ENCODE measurements at regions of chr7 and their contacts with region 1.

Region 1: GRCh38 chr7:28685644-28686417 is 272.3 kb downstream of the TRIL start:
- DNase-seq: peak; percentile 96 to 98
- H3K4me3 ChIP-seq: peak overlapping the region; percentile 47 to 50
- H3K27ac ChIP-seq: peak overlapping the region; percentile 72 to 73
- H3K4me1 ChIP-seq: peaks cover 0 to 38% (median 16%) of the 10 kb centered on the region in 4 donors
- H3K27me3 ChIP-seq: no peaks in the 10 kb centered on the region
- CTCF ChIP-seq: no peak

Region 2: GRCh38 chr7:28626624-28627262 is 59.1 kb before region 1 on chr7:
- intact Hi-C with region 1: loop called (anchors 5 kb)
- DNase-seq: peak in 1 of 2 donors; percentile 26
- H3K4me3 ChIP-seq: no peak overlapping the region
- H3K27ac ChIP-seq: no peak overlapping the region
- H3K4me1 ChIP-seq: peaks cover 0 to 92% (median 2%) of the 10 kb centered on the region in 4 donors
- H3K27me3 ChIP-seq: no peaks in the 10 kb centered on the region
- CTCF ChIP-seq: peak; percentile 45 to 48

Region 3: DNA sequence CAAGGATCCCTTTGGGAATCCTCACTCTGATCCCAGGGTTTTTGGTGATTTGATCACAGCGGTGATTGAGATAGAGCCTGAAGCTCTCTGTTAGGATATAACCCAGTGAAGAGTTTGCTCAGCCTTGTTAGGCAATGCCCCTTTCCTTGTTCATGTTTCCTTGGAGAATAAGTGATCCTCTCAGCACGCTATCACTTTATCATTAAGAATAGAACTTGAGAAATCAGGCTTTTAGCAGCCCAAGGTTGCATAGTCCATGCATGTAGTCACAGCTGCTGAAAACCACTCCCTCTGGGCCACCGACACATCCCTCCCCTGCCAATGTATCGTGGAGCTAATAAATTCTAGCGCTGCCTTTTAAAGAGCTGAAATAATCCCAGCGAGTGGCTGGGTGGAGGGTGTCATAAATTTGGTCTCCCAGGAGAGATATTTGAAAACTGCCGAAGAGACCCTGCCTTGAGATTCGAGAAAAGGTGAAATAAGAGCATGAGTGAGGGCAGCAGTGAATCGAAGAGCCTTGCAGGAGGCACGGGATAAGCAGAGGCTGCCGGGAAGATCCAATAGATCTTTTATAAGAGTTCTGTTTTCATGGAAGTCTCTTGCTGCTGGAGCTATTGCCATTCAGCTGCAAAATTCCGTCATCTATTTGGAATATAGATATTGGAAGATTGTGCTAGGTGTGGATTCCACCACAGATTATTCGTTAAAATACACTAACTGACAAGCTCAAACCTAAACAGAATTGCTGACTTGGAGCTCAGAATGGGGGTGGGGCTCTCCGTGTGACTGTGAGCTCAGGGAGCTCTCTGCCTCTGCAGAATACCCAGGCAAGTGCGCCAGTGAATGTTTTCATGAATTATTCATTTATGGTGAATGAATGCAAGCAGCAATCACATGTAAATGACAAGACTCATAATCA is 22.5 kb after region 1 on chr7:
- intact Hi-C with region 1: no loop called
- DNase-seq: peak in 1 of 2 donors; percentile 31
- H3K4me3 ChIP-seq: peak overlapping the region; percentile 41 to 46
- H3K27ac ChIP-seq: peak overlapping the region in 1 of 2 donors; percentile 46
- H3K4me1 ChIP-seq: peaks cover 0 to 20% (median 9%) of the 10 kb centered on the region in 4 donors
- H3K27me3 ChIP-seq: no peaks in the 10 kb centered on the region
- CTCF ChIP-seq: no peak

Region 4: GRCh38 chr7:30322271-30323005 is 1636.6 kb after region 1 on chr7:
- intact Hi-C with region 1: no loop called
- DNase-seq: no peak
- H3K4me3 ChIP-seq: no peak overlapping the region
- H3K27ac ChIP-seq: no peak overlapping the region
- H3K4me1 ChIP-seq: peaks cover 0 to 23% (median 8%) of the 10 kb centered on the region in 4 donors
- H3K27me3 ChIP-seq: no peaks in the 10 kb centered on the region
- CTCF ChIP-seq: no peak

Measured in tibial artery (tissue), 4 donors.